K562 (cell line): ENCODE measurements at regions of chr1 and their contacts with region 1.

Region 1: GRCh38 chr1:55284852-55285251 is 69.7 kb upstream of the USP24 start:
- DNase-seq: peak in 2 of 4 experiments; percentile 48 to 54
- ATAC-seq: peak; percentile 83
- H3K4me3 ChIP-seq: no peak overlapping the region
- H3K27ac ChIP-seq: no peak overlapping the region
- H3K4me1 ChIP-seq: no peaks in the 10 kb centered on the region; a peak in 1 of 5 replicates
- H3K27me3 ChIP-seq: peaks cover 22 to 27% of the 10 kb centered on the region in 2 experiments
- CTCF ChIP-seq: peak; percentile 53 to 80 (median 60); a peak in 4 of 6 replicates
- EP300 ChIP-seq: no peak
- POLR2A ChIP-seq: no peak
- RAD21 ChIP-seq: peak; percentile 68 to 70

Region 2: DNA sequence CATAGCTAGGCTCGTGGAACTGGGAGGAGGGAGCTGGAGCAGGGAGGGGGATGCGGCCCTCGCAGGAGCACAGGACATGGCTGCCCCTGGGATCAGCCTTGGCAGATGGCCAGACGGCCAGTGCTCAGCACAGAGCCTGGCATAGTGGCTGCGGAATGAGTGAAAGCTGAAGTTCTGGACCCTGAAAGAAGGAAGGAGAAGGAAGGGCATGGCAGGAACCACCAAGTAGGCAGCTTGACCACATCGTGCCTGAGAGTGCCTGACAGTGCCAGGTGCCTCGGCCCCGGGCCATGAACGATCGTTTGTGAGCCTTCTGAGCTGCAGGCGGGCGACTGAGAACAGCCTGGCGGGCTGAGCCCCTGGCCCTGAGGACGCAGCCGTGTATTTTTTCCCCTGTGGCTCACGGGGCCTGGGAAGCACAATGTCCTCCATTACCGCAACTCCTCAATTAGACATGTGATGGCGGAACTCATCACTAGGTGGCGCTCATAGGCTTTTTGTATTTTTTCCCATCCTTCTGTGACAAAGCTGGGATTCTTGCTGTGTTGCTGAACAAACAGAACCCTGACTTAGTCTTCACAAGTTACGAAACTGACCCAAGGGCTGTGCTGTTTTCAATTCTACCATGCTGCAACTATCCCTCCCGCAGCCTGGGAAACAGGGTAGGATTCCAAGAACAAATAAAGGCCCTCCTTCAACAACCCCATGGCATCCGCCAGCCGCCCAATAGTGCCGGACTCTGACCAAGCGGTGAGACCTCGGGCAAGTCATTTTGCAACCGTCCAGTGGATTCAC is 334.3 kb before region 1 on chr1:
- CTCF ChIA-PET with region 1: interaction called, 5 read pairs
- POLR2A ChIA-PET with region 1: no interaction called
- in situ Hi-C with region 1: no loop called
- intact Hi-C with region 1: loop called (anchors 5 kb)
- DNase-seq: peak; percentile 58 to 74 (median 66)
- ATAC-seq: peak; percentile 87
- H3K4me3 ChIP-seq: no peak overlapping the region
- H3K27ac ChIP-seq: no peak overlapping the region
- H3K4me1 ChIP-seq: peaks cover 4 to 7% of the 10 kb centered on the region in 2 experiments; a peak in 4 of 5 replicates
- H3K27me3 ChIP-seq: peaks cover 0 to 15% of the 10 kb centered on the region in 2 experiments; a peak in 4 of 5 replicates
- CTCF ChIP-seq: peak; percentile 75 to 81 (median 77)
- EP300 ChIP-seq: no peak
- POLR2A ChIP-seq: no peak
- RAD21 ChIP-seq: peak; percentile 80 to 90

Region 3: GRCh38 chr1:55230659-55231058 is 54.2 kb before region 1 on chr1:
- CTCF ChIA-PET with region 1: no interaction called
- POLR2A ChIA-PET with region 1: no interaction called
- in situ Hi-C with region 1: no loop called
- intact Hi-C with region 1: no loop called
- DNase-seq: no peak
- ATAC-seq: no peak
- H3K4me3 ChIP-seq: no peak overlapping the region
- H3K27ac ChIP-seq: no peak overlapping the region
- H3K4me1 ChIP-seq: no peaks in the 10 kb centered on the region; a peak in 1 of 5 replicates
- H3K27me3 ChIP-seq: no peaks in the 10 kb centered on the region
- CTCF ChIP-seq: no peak
- EP300 ChIP-seq: no peak
- POLR2A ChIP-seq: no peak
- RAD21 ChIP-seq: no peak

Region 4: GRCh38 chr1:55337801-55338447 is 53.1 kb after region 1 on chr1:
- CTCF ChIA-PET with region 1: interaction called, 10 read pairs
- POLR2A ChIA-PET with region 1: interaction called, 3 read pairs
- in situ Hi-C with region 1: no loop called
- intact Hi-C with region 1: loop called (anchors 2 kb)
- DNase-seq: peak; percentile 31 to 62 (median 42)
- ATAC-seq: peak; percentile 95
- H3K4me3 ChIP-seq: no peak overlapping the region
- H3K27ac ChIP-seq: no peak overlapping the region
- H3K4me1 ChIP-seq: 0 out of 5 replicates have a peak, but pooled peaks cover 0 to 2% of the 10 kb centered on the region in 2 experiments
- H3K27me3 ChIP-seq: peaks cover 4 to 28% of the 10 kb centered on the region in 2 experiments; a peak in 3 of 5 replicates
- CTCF ChIP-seq: peak; percentile 57 to 80 (median 62)
- EP300 ChIP-seq: no peak
- POLR2A ChIP-seq: no peak
- RAD21 ChIP-seq: peak; percentile 62 to 75

Region 5: GRCh38 chr1:55483523-55483922 is 198.7 kb after region 1 on chr1:
- CTCF ChIA-PET with region 1: interaction called, 4 read pairs
- POLR2A ChIA-PET with region 1: no interaction called
- in situ Hi-C with region 1: no loop called
- intact Hi-C with region 1: loop called (anchors 5 kb)
- DNase-seq: peak; percentile 16 to 22 (median 18)
- ATAC-seq: peak; percentile 93
- H3K4me3 ChIP-seq: no peak overlapping the region
- H3K27ac ChIP-seq: no peak overlapping the region
- H3K4me1 ChIP-seq: no peaks in the 10 kb centered on the region
- H3K27me3 ChIP-seq: no peaks in the 10 kb centered on the region
- CTCF ChIP-seq: peak; percentile 22 to 74 (median 40); a peak in 5 of 6 replicates
- EP300 ChIP-seq: no peak
- POLR2A ChIP-seq: no peak
- RAD21 ChIP-seq: peak; percentile 72 to 77

Region 6: GRCh38 chr1:56584910-56585528 is 1300.2 kb after region 1 on chr1:
- CTCF ChIA-PET with region 1: interaction called, 5 read pairs
- POLR2A ChIA-PET with region 1: no interaction called
- in situ Hi-C with region 1: loop called (anchors 10 kb)
- intact Hi-C with region 1: loop called (anchors 2 kb)
- DNase-seq: peak; percentile 37 to 49 (median 48)
- ATAC-seq: peak; percentile 70; the same call in 2 of the 3 replicates
- H3K4me3 ChIP-seq: no peak overlapping the region
- H3K27ac ChIP-seq: no peak overlapping the region
- H3K4me1 ChIP-seq: no peaks in the 10 kb centered on the region
- H3K27me3 ChIP-seq: no peaks in the 10 kb centered on the region; a peak in 1 of 5 replicates
- CTCF ChIP-seq: peak; percentile 46 to 79 (median 65); a peak in 5 of 6 replicates
- EP300 ChIP-seq: no peak
- POLR2A ChIP-seq: no peak
- RAD21 ChIP-seq: peak; percentile 88 to 89

Region 7: DNA sequence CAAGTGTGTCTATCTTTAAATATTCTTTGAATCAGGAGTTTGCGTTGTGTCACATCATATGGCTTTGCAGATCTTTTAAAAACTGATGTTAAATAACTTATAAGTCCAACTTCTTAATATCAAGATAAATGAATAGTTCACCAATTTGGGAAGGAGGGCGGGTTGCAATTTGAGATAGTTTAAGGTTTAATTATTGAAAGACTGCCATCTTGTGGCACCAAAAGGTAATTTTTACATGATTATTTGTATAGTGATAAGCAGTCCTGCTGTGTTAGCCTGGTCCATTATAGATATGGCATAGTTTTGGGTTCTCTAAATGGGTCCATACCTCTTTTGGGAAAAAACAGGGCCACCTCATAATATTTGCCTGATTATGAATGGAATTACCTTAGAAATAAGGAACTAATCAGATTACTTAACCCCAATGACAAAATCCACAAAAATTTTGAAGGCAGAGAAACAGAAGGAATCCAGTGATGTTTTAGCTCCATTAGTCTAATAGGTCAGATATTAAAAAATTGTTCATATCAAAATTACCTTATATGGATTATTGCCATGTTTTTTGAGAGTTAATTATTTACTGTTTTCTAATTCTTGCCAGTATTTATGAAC is 1424.5 kb after region 1 on chr1:
- CTCF ChIA-PET with region 1: interaction called, 9 read pairs
- POLR2A ChIA-PET with region 1: no interaction called
- in situ Hi-C with region 1: no loop called
- intact Hi-C with region 1: loop called (anchors 10 kb)
- DNase-seq: peak; percentile 31 to 61 (median 38)
- ATAC-seq: peak; percentile 86
- H3K4me3 ChIP-seq: no peak overlapping the region
- H3K27ac ChIP-seq: no peak overlapping the region
- H3K4me1 ChIP-seq: no peaks in the 10 kb centered on the region
- H3K27me3 ChIP-seq: no peaks in the 10 kb centered on the region
- CTCF ChIP-seq: peak in 2 of 3 experiments; percentile 47 to 63; a peak in 4 of 6 replicates
- EP300 ChIP-seq: no peak
- POLR2A ChIP-seq: no peak
- RAD21 ChIP-seq: peak; percentile 39 to 66

Region 8: DNA sequence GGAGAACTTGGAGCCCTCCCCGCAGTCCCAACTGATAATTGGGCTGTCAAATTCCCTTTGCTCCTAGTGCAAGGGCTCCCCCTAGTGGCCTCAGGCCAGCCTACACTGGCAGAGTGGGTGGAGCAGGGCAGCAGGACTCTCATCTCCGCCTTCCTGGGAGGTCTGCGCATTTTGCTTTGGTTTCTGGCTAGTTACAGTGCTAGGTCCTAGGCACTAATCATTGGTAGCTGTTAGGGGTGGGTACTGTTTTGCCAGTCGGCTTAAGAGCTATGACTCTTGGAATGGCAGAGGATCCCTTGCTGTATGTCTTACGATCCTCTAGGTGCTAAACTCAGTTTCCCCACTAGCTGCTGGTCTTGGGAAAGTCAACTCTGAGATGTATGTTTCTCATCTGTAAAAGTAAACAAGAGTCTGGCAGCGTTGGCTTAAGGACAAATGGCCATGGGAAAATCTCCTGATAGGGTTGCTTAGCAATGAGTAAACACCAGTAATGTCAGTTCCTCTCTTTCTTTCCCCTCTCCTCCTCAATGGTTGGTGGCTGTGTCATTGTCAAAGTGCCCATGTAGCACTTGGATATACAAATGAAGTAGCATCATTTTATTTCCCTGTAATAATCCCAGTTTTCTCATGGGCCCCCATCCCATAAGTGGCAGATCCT is 1536.4 kb after region 1 on chr1:
- CTCF ChIA-PET with region 1: interaction called, 7 read pairs
- POLR2A ChIA-PET with region 1: no interaction called
- in situ Hi-C with region 1: no loop called
- intact Hi-C with region 1: loop called (anchors 5 kb)
- DNase-seq: peak; percentile 80 to 85 (median 81)
- ATAC-seq: peak; percentile 99
- H3K4me3 ChIP-seq: no peak overlapping the region
- H3K27ac ChIP-seq: no peak overlapping the region
- H3K4me1 ChIP-seq: no peaks in the 10 kb centered on the region
- H3K27me3 ChIP-seq: peaks cover 0 to 8% of the 10 kb centered on the region in 2 experiments; a peak in 2 of 5 replicates
- CTCF ChIP-seq: peak; percentile 82 to 94 (median 88)
- EP300 ChIP-seq: no peak
- POLR2A ChIP-seq: no peak
- RAD21 ChIP-seq: peak; percentile 47 to 80